Astrocyte of the cerebellum (primary cell): ENCODE measurements at regions of chr13 and their contacts with region 1.

Region 1: DNA sequence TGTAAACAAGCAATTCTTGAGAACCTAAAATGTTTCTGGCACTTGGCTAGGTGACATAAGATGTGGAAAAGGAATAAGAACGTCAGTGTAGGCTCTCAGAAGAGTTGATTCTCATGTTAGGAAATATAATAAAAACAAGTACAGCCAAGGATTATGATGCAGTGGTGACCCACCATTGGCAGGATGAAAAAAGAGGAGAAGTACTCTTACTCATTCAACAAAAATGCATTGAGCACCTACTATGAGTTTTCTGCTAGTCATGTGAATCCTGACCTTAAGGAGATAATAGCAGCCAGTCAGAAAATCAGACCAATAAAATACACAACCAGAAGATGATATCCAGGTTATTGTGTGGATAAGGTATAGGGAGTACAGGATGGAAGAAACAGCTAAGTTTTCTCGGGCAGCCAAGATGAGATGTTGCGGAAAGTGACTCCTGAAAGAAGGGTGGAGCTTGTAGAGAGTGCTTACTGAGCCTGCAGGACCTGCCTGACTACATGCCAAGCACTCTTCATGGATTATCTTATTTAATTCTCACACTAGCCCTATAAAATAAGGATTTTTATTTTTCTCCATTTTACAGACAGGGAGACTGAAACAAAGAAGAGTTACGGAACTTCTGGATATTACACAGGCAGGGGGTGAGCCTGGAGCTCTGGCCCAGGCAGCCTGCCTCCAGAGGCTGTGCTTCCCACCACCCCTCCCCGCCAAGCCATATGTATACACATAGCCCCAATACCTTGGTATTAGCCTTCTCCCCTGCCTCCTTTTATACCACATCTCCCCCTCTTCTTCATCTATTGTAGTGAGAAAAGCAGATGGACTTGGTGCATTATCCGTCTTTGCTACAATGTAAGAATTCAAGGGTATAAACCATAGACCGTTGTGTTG is 58.0 kb downstream of the TGDS start:
- DNase-seq: no peak
- H3K4me3 ChIP-seq: no peak overlapping the region
- CTCF ChIP-seq: no peak

Region 2: DNA sequence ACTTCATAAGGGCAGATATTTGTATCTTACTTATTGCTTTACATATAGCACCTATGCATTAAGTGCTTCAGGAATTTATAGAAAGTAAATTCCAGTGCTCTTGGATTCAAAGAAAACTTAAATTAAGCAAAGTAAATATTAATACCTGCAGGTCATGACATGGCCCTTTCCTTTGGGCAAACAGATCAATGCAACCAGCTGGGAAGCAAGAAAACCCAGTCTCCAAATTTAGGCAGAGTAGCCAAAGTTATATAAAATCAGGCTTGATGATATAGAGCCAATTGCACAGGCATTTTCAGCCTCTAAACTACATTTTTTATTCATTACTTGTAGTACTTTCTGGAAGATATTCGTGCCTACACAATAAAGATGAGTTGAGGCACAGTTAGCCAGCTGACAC is 41.1 kb after region 1 on chr13:
- in situ Hi-C with region 1: loop called (anchors 5 kb)
- DNase-seq: no peak
- H3K4me3 ChIP-seq: no peak overlapping the region
- CTCF ChIP-seq: no peak